Activated T-helper 2 cell treated with anti-CD3 and anti-CD28 coated beads, Interferon-gamma antibody, Interleukin-2, Interleukin-4, amounts not matched to agents 10 μg/mL and 5 μg/mL and 100 μg/mL, durations not matched to agents 14 hours and 24 hours and 36 hours (primary cell): ENCODE measurements at regions of chr10 and their contacts with region 1.

Region 1: DNA sequence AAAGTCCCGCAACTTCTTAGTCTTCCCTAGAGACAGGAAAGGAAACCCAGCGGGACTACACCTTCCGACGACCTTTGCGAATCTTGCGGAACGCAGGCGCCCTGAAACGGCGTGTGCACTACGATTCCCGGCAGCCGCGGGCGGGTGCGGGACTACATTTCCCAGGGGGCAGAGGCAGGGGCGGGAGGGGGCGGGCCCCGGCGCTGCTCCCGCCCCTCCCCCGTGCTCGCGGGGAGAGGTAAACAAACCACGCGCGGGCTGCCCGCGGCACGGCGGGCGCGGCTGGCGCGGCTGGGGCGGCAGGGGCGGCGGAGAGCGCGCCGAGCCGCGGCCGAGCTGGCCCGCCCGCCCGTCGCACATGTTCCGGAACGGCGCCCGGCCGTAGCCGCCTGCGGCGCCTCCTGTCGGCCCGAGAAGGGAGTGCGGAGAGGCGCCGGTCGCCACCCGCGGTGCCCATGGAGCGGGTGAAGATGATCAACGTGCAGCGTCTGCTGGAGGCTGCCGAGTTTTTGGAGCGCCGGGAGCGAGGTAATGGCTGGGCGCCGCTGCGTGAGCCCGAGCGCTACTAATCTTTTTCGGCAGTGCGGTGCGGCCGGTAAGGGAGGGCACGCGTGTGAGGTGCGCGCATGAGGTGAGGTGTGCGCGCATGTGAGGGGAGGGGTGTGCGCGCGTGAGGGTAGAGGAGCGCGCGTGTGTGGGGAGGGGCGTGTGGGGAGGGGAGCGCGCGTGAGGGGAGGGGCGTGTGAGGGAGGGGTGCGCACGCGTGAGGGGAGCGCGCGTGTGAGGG is 18.5 kb downstream of the MXI1 start:
- DNase-seq: peak; percentile 79
- H3K4me3 Mint-ChIP-seq: peak overlapping the region; percentile 95
- H3K27ac Mint-ChIP-seq: peak overlapping the region; percentile 97
- H3K4me1 Mint-ChIP-seq: peaks cover 36% of the 10 kb centered on the region
- H3K27me3 Mint-ChIP-seq: peaks cover 18% of the 10 kb centered on the region

Region 2: DNA sequence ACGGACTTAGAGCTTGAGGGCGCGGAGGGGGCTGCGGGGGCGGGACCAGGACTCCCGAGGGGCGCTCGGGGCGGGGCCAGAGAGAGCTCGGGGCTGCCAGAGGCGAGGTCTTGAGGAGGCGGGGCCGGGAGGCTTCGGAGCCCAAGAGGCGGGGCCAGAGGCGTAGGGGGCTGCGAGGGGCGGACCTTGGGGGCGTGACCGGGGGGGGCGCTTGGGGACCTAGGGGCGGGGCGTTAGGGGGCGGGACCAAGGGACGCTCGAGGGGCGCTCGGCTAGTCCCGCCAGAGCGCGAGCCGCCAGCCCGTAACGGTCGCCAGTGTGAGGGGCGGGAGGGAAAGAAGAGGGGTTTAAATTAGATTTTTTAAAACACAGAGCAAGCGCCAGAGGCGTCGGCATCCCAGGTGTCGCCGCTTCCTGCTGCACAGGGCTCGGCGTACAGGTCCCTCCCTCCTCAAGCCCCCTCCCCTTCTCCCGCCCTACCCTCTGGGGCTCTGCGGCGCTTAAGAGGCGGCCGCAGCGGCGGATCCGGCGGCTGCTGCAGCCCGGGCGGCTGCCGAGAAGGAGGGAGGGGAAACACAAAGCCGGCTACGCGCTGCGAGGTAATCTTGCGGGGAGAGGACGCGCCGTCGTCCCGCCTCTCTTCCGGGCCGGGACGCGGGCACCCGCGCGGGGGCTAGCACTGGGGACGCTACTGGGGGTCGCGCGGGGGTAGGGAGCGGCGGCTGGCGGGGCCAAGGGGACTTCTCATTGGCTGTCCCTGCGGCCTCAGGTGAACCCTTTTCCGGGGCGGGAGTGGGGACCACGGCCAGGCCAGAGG is 218.0 kb before region 1 on chr10 and contains the start of gene ADD3:
- intact Hi-C with region 1: loop called (anchors 5 kb)
- DNase-seq: peak; percentile 81
- H3K4me3 Mint-ChIP-seq: peak within 1 kb of the TSS; percentile 92
- H3K27ac Mint-ChIP-seq: peak within 1 kb of the TSS; percentile 89
- H3K4me1 Mint-ChIP-seq: peaks cover 41% of the 10 kb centered on the region
- H3K27me3 Mint-ChIP-seq: peaks cover 4% of the 10 kb centered on the region
- total RNA-seq, gene ADD3: 37.8 and 47.4 TPM in 2 replicates

Region 3: GRCh38 chr10:110101464-110102144 is 124.3 kb before region 1 on chr10:
- intact Hi-C with region 1: no loop called
- DNase-seq: no peak
- H3K4me3 Mint-ChIP-seq: no peak overlapping the region
- H3K27ac Mint-ChIP-seq: peak overlapping the region; percentile 50
- H3K4me1 Mint-ChIP-seq: peaks cover 22% of the 10 kb centered on the region
- H3K27me3 Mint-ChIP-seq: no peaks in the 10 kb centered on the region

Region 4: DNA sequence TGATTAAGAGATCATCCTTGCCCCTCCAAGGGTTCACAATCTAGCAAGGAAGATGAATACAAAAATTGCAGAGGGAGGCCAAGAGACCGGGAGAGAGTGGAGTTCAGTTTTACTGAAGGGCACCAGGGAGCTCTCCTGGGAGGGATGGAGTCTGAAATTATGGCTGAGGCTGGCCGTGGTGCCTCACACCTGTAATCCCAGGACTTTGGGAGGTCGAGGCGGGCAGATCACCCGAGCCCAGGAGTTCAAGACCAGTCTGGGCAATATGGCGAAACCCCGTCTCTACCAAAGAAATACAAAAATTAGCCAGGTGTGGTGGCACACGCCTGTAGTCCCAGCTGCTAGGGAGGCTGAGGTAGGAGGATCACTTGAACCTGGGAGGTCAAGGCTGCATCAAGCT is 69.9 kb before region 1 on chr10:
- intact Hi-C with region 1: loop called (anchors 2 kb)
- DNase-seq: no peak
- H3K4me3 Mint-ChIP-seq: no peak overlapping the region
- H3K27ac Mint-ChIP-seq: no peak overlapping the region
- H3K4me1 Mint-ChIP-seq: peaks cover 36% of the 10 kb centered on the region
- H3K27me3 Mint-ChIP-seq: peaks cover 69% of the 10 kb centered on the region

Region 5: GRCh38 chr10:110252151-110252550 is 26.2 kb after region 1 on chr10:
- intact Hi-C with region 1: loop called (anchors 1 kb)
- DNase-seq: no peak
- H3K4me3 Mint-ChIP-seq: no peak overlapping the region
- H3K27ac Mint-ChIP-seq: no peak overlapping the region
- H3K4me1 Mint-ChIP-seq: peaks cover 31% of the 10 kb centered on the region
- H3K27me3 Mint-ChIP-seq: peaks cover 48% of the 10 kb centered on the region

Region 6: DNA sequence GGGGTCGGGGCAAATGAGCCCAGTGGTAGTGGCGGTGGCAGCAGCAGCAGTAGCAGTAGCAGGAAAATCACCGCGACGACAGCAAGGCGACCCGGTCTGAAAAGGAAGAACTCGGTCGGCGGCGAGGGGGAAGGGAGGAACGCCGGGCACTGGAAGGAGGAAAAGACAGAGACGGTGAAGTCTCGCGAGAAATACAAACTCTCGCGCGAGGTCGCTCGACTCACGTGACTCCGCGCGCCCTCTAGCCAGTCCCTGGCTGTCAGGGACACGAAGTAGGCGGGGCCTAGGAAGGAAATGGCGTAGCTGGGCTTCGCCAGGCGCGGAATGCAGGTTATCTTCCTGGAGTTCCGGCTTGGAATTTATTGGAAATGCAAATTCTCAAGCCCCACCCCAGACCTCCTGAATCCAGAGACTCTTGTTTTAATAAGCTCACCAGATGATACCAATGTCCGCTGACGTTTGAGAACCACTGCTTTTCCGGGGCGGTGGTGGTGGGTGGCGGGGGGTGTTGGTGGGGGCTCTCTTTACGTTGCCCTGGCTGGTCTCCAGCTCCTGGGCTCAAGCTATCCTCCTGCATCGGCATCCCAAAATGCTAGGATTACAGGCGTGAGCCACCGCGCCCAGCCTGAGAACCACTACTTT is 79.0 kb after region 1 on chr10 and contains the start of gene SMNDC1:
- intact Hi-C with region 1: loop called (anchors 2 kb)
- DNase-seq: peak; percentile 97
- H3K4me3 Mint-ChIP-seq: peak within 1 kb of the TSS; percentile 93
- H3K27ac Mint-ChIP-seq: peak within 1 kb of the TSS; percentile 94
- H3K4me1 Mint-ChIP-seq: peaks cover 37% of the 10 kb centered on the region
- H3K27me3 Mint-ChIP-seq: no peaks in the 10 kb centered on the region
- total RNA-seq, gene SMNDC1: 40.2 and 43.1 TPM in 2 replicates

Region 7: GRCh38 chr10:110497438-110498086 is 271.6 kb after region 1 on chr10 and contains the start of gene DUSP5:
- intact Hi-C with region 1: loop called (anchors 5 kb)
- DNase-seq: peak; percentile 95
- H3K4me3 Mint-ChIP-seq: peak within 1 kb of the TSS; percentile 97
- H3K27ac Mint-ChIP-seq: peak within 1 kb of the TSS; percentile 84
- H3K4me1 Mint-ChIP-seq: peaks cover 47% of the 10 kb centered on the region
- H3K27me3 Mint-ChIP-seq: no peaks in the 10 kb centered on the region
- total RNA-seq, gene DUSP5: 84.3 and 86.2 TPM in 2 replicates

Region 8: GRCh38 chr10:110918643-110919363 is 692.9 kb after region 1 on chr10 and contains the start of gene BBIP1:
- intact Hi-C with region 1: loop called (anchors 5 kb)
- DNase-seq: no peak
- H3K4me3 Mint-ChIP-seq: peak within 1 kb of the TSS; percentile 94
- H3K27ac Mint-ChIP-seq: peak within 1 kb of the TSS; percentile 93
- H3K4me1 Mint-ChIP-seq: peaks cover 39% of the 10 kb centered on the region
- H3K27me3 Mint-ChIP-seq: no peaks in the 10 kb centered on the region
- total RNA-seq, gene BBIP1: 31.5 and 32.7 TPM in 2 replicates

Region 9: DNA sequence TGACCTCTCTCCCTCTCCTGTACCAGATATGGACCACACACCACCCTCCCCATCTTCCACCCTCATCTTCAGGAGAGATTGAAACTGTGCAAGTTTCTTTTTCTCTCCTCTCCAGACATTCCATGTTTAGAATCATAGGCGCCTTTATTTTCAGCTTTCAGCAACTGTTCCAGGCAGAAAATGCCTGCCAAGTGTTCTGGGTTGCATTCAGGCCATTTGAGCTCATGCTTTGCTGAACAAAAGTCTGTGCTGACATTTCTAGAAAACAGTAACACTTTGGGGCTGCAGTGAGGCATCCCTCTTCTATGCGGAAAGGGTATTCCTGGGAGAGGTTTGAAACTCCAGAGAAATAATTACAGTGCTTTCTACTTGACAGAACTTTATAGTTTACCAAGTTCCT is 1595.9 kb after region 1 on chr10:
- intact Hi-C with region 1: no loop called
- DNase-seq: no peak
- H3K4me3 Mint-ChIP-seq: no peak overlapping the region
- H3K27ac Mint-ChIP-seq: no peak overlapping the region
- H3K4me1 Mint-ChIP-seq: no peaks in the 10 kb centered on the region
- H3K27me3 Mint-ChIP-seq: no peaks in the 10 kb centered on the region